ENCODE measurements at regions of chr1 and their contacts with region 1.

Region 1: GRCh38 chr1:11037740-11038182 is 9.3 kb downstream of the MASP2 start:
- DNase-seq: peak; percentile 77
- H3K4me3 ChIP-seq: no peak overlapping the region
- H3K27ac ChIP-seq: no peak overlapping the region
- H3K27me3 ChIP-seq: peaks cover 5% of the 10 kb centered on the region
- CTCF ChIP-seq: peak; percentile 100

Region 2: DNA sequence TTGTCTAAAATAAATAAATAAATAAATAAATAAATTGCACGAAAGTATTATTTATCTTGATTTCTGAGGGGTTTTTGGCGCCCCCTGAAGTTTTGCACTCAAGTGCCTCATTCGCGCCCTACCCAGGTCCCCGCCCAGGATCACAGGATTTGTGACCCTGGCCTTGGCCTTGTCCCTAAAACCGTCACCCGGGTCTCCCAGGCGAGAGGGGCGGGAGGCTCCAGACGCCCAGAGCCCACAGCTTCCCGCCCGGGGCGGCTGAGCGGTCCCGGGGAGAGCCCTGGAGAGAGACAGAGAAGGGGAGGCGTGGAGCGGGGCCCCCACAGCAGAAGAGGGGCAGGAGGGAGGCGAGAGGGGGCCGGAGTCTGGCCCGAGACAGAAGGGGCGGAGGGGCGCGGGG is 149.5 kb before region 1 on chr1:
- CTCF ChIA-PET with region 1: no interaction called
- POLR2A ChIA-PET with region 1: no interaction called
- DNase-seq: no peak
- H3K4me3 ChIP-seq: no peak overlapping the region
- H3K27ac ChIP-seq: no peak overlapping the region
- H3K27me3 ChIP-seq: peaks cover 44% of the 10 kb centered on the region
- CTCF ChIP-seq: no peak

Region 3: GRCh38 chr1:11059990-11060830 is 22.4 kb after region 1 on chr1 and contains the start of gene SRM:
- CTCF ChIA-PET with region 1: interaction called, 75 read pairs
- POLR2A ChIA-PET with region 1: interaction called, 6 read pairs
- DNase-seq: peak; percentile 67
- H3K4me3 ChIP-seq: peak within 1 kb of the TSS; percentile 92
- H3K27ac ChIP-seq: peak within 1 kb of the TSS; percentile 61
- H3K27me3 ChIP-seq: no peaks in the 10 kb centered on the region
- CTCF ChIP-seq: peak; percentile 30
- polyA plus RNA-seq, gene SRM: 41.4 and 63.8 TPM in 2 replicates

Region 4: GRCh38 chr1:11109047-11109760 is 71.4 kb after region 1 on chr1:
- CTCF ChIA-PET with region 1: interaction called, 12 read pairs
- POLR2A ChIA-PET with region 1: no interaction called
- DNase-seq: no peak
- H3K4me3 ChIP-seq: no peak overlapping the region
- H3K27ac ChIP-seq: no peak overlapping the region
- H3K27me3 ChIP-seq: no peaks in the 10 kb centered on the region
- CTCF ChIP-seq: no peak

Region 5: DNA sequence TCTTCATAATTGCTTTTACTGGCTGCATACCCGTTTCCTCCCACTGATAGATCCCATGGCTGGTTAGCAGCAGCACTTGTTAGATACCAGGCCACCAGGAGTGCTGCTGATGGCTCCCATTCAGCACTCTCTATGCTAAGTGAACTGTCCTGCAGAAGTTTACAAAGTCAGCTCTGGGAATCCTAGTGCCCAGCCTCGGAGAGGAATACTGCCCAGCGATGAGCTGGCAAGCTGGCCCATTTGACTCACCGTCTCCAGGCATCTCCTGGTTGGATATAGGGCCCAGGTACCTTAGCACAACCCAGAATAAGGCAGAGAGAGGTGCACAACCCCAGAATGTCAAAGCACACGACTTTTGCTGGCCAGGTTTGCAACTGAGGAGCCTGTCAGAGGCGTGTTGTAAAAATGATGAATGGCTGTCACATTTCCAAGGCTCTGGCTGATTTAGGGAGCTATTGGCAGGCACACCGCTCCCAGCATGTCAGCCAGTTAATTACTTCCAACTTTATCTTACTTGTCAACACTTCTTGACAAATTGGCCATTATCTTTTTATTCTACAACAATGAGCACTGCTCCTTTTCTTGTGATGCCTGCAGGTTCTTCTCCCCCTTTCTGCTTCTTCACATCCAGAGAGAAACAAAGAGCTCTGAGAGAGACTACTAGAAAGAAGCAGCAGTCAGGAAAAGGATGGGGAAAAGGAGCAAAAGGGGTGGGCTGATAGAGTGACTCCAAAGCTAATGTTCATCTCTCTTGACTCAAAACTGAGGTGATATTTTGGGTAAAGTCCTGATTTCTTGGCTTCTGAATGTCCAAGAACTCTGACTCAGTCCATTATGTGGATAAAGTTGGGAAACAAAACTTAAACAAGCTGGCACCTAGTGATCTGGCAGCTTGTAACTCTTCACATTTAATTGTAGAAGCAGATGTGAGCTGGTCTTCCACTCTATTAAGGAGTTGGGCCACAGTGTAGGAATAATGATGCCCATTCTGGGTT is 140.6 kb after region 1 on chr1:
- CTCF ChIA-PET with region 1: interaction called, 13 read pairs
- POLR2A ChIA-PET with region 1: no interaction called
- DNase-seq: no peak
- H3K4me3 ChIP-seq: no peak overlapping the region
- H3K27ac ChIP-seq: no peak overlapping the region
- H3K27me3 ChIP-seq: no peaks in the 10 kb centered on the region
- CTCF ChIP-seq: no peak

Region 6: DNA sequence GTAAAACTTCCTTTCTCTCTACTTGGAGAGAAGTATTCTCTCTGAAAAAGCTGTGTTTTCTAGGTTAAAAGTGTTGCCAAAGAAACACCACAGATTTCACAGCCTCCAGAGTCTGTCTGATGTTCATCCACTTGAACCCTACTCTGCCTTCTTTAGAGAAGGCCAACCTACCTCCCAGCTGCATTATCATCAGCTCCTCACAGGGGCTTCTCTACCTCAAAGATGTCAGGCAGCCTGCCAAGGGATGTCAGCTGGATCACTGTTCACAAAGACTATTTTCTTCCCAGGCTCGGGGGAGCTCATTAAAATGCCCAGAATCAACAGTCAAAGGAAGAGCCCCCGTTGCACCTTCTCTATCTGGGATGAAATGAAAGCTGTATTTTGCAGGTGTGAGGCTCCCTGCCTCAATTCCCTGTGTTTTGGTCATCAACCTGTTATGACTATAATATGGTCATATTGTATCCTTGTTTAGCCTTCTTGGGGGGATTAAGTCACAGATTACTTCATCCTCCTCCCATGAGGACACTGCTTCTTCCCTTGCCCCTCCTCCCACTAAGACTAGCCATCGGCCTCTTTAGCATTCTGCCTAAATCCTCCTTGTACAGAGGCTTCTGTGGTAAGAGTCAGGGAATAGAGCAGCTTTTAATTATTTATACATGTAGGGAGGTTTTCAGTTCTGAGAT is 177.1 kb after region 1 on chr1:
- CTCF ChIA-PET with region 1: interaction called, 12 read pairs
- POLR2A ChIA-PET with region 1: interaction called, 8 read pairs
- DNase-seq: no peak
- H3K4me3 ChIP-seq: no peak overlapping the region
- H3K27ac ChIP-seq: no peak overlapping the region
- H3K27me3 ChIP-seq: no peaks in the 10 kb centered on the region
- CTCF ChIP-seq: no peak

Measured in AG04450 (cell line).